AG04450 (cell line): ENCODE measurements at regions of chr15 and their contacts with region 1.

Region 1: GRCh38 chr15:45331972-45332371 is 46.4 kb downstream of the GATM start:
- DNase-seq: no peak
- H3K4me3 ChIP-seq: no peak overlapping the region
- H3K27ac ChIP-seq: no peak overlapping the region
- H3K27me3 ChIP-seq: peaks cover 8% of the 10 kb centered on the region
- CTCF ChIP-seq: no peak

Region 2: DNA sequence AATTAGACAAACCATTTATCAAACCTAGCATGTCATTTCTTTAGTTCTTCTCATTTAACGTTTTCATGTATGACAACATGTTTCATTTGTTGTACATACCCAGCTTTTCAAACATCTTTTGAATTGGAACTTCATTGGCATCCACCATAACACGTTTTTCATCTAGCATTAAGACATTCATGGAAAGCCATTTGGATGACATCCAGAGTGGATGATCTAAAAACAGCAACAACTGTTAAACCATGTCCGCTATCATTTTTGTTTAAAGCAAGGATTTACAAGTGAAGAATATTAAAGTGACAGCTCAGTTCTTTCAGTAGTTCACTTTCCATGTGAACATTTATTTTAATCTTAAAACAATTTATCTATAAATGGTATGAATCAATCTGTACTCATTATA is 31.8 kb after region 1 on chr15:
- CTCF ChIA-PET with region 1: no interaction called
- POLR2A ChIA-PET with region 1: no interaction called
- DNase-seq: no peak
- H3K4me3 ChIP-seq: no peak overlapping the region
- H3K27ac ChIP-seq: no peak overlapping the region
- H3K27me3 ChIP-seq: peaks cover 2% of the 10 kb centered on the region
- CTCF ChIP-seq: no peak

Region 3: GRCh38 chr15:45378149-45378912 is 46.4 kb after region 1 on chr15 and contains the start of gene GATM:
- CTCF ChIA-PET with region 1: no interaction called
- POLR2A ChIA-PET with region 1: interaction called, 14 read pairs
- DNase-seq: peak; percentile 53
- H3K4me3 ChIP-seq: peak within 1 kb of the TSS; percentile 52
- H3K27ac ChIP-seq: no peak within 1 kb of the TSS
- H3K27me3 ChIP-seq: peaks cover 62% of the 10 kb centered on the region
- CTCF ChIP-seq: peak; percentile 61
- polyA plus RNA-seq, gene GATM: 0.07 and 0.10 TPM in 2 replicates